ENCODE measurements at regions of chr20 and their contacts with region 1.

Region 1: GRCh38 chr20:2752567-2753460 is 47.6 kb downstream of the CPXM1 start:
- DNase-seq: peak; percentile 63 to 72 (median 66)
- ATAC-seq: peak; percentile 74
- H3K4me3 ChIP-seq: peak overlapping the region; percentile 40
- H3K27ac ChIP-seq: no peak overlapping the region
- H3K4me1 ChIP-seq: peaks cover 2 to 39% of the 10 kb centered on the region in 2 experiments; a peak in 4 of 5 replicates
- H3K27me3 ChIP-seq: peaks cover 0 to 35% of the 10 kb centered on the region in 2 experiments; a peak in 2 of 5 replicates
- CTCF ChIP-seq: peak; percentile 64 to 79 (median 75)
- EP300 ChIP-seq: no peak
- POLR2A ChIP-seq: no peak
- RAD21 ChIP-seq: peak in 1 of 2 experiments; percentile 45; a peak in 2 of 4 replicates

Region 2: DNA sequence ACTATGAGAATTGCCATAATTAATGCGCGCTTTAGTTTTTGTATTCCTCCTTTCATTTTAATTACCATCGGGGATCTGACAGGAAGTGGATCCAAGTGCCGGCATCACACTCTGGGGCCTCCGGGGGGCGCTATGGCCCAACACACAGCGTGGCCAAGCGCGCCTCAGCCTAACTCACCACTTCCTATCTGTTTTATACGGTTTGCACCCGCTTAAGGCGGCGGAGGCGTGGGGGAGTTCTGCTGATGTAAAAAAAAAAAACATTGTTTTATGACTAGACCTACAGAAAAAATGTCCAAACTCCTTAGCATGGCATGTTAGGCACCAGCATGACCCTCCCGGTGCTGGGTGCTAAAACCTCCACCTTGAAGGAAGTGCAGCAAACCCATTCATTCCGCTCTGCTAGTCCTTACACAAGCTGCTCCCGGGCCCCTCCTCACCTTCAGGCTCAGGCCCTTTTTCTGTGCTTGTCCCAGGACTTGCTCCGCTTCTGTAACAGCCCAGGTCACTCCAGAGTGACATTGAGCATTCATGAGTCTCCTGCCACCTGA is 64.7 kb before region 1 on chr20:
- CTCF ChIA-PET with region 1: no interaction called
- POLR2A ChIA-PET with region 1: no interaction called
- in situ Hi-C with region 1: no loop called
- intact Hi-C with region 1: loop called (anchors 1 kb)
- DNase-seq: peak; percentile 60 to 77 (median 64)
- ATAC-seq: peak; percentile 95
- H3K4me3 ChIP-seq: no peak overlapping the region; the same call in 1 of the 2 replicates
- H3K27ac ChIP-seq: no peak overlapping the region
- H3K4me1 ChIP-seq: peaks cover 0 to 9% of the 10 kb centered on the region in 2 experiments; a peak in 3 of 5 replicates
- H3K27me3 ChIP-seq: peaks cover 6 to 28% of the 10 kb centered on the region in 2 experiments; a peak in 4 of 5 replicates
- CTCF ChIP-seq: peak; percentile 83 to 89 (median 84)
- EP300 ChIP-seq: no peak
- POLR2A ChIP-seq: no peak
- RAD21 ChIP-seq: peak; percentile 65 to 80

Region 3: DNA sequence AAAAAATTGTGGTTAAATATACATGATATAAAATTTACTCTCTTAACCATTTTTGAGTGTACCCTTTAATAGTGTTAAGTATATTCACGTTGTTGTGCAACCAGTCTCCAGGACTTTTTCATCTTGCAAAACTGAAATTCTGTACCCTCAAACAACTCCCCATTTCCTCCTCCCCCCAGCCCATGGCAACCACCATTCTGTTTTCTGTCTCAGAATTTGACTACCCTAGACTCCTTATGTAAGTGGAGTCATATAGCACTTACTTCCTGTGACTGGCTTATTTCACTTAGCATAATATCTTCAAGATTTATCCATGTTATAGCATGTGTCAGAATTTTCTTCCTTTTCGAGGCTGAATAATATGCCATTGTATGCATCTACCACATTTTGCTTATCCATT is 92.8 kb after region 1 on chr20:
- CTCF ChIA-PET with region 1: interaction called, 24 read pairs
- POLR2A ChIA-PET with region 1: no interaction called
- in situ Hi-C with region 1: loop called (anchors 5 kb)
- intact Hi-C with region 1: no loop called
- DNase-seq: no peak
- ATAC-seq: no peak
- H3K4me3 ChIP-seq: no peak overlapping the region
- H3K27ac ChIP-seq: no peak overlapping the region
- H3K4me1 ChIP-seq: peaks cover 5 to 8% of the 10 kb centered on the region in 2 experiments; a peak in 3 of 5 replicates
- H3K27me3 ChIP-seq: no peaks in the 10 kb centered on the region
- CTCF ChIP-seq: no peak
- EP300 ChIP-seq: no peak
- POLR2A ChIP-seq: no peak
- RAD21 ChIP-seq: no peak

Region 4: GRCh38 chr20:2851086-2851485 is 98.3 kb after region 1 on chr20:
- CTCF ChIA-PET with region 1: interaction called, 24 read pairs
- POLR2A ChIA-PET with region 1: no interaction called
- in situ Hi-C with region 1: loop called (anchors 5 kb)
- intact Hi-C with region 1: loop called (anchors 1 kb)
- DNase-seq: no peak
- ATAC-seq: no peak
- H3K4me3 ChIP-seq: no peak overlapping the region
- H3K27ac ChIP-seq: no peak overlapping the region
- H3K4me1 ChIP-seq: peaks cover 2 to 3% of the 10 kb centered on the region in 2 experiments; a peak in 2 of 5 replicates
- H3K27me3 ChIP-seq: no peaks in the 10 kb centered on the region
- CTCF ChIP-seq: no peak
- EP300 ChIP-seq: no peak
- POLR2A ChIP-seq: no peak
- RAD21 ChIP-seq: no peak

Region 5: DNA sequence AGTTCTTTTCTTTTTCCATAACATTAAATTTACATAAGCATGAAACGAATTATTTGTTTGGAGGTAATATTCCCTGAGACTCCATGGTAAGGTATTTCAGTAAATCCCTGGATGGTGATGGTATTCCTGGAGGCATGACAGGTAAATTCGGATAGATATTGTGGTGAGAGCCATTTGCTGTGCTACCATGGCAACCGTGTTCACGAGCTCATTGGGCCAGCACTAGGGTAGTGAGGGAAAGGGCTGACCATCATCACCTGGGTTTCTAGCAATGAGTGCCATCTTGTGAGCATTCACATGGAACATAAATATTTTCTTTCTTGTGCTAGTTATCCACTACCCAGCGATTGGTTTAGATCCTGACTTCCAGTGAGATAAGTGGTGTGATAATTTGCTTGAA is 238.7 kb after region 1 on chr20:
- CTCF ChIA-PET with region 1: no interaction called
- POLR2A ChIA-PET with region 1: no interaction called
- in situ Hi-C with region 1: loop called (anchors 10 kb)
- intact Hi-C with region 1: no loop called
- DNase-seq: peak in 1 of 4 experiments; percentile 11
- ATAC-seq: no peak
- H3K4me3 ChIP-seq: no peak overlapping the region
- H3K27ac ChIP-seq: no peak overlapping the region
- H3K4me1 ChIP-seq: no peaks in the 10 kb centered on the region
- H3K27me3 ChIP-seq: no peaks in the 10 kb centered on the region
- CTCF ChIP-seq: no peak
- EP300 ChIP-seq: no peak
- POLR2A ChIP-seq: no peak
- RAD21 ChIP-seq: no peak

Region 6: GRCh38 chr20:3000852-3001523 is 248.2 kb after region 1 on chr20:
- CTCF ChIA-PET with region 1: interaction called, 9 read pairs
- POLR2A ChIA-PET with region 1: no interaction called
- in situ Hi-C with region 1: loop called (anchors 10 kb)
- intact Hi-C with region 1: loop called (anchors 2 kb)
- DNase-seq: peak; percentile 16 to 59 (median 20)
- ATAC-seq: peak; percentile 88
- H3K4me3 ChIP-seq: no peak overlapping the region
- H3K27ac ChIP-seq: no peak overlapping the region
- H3K4me1 ChIP-seq: no peaks in the 10 kb centered on the region
- H3K27me3 ChIP-seq: no peaks in the 10 kb centered on the region
- CTCF ChIP-seq: peak in 2 of 3 experiments; percentile 49 to 60; a peak in 4 of 6 replicates
- EP300 ChIP-seq: no peak
- POLR2A ChIP-seq: no peak
- RAD21 ChIP-seq: peak; percentile 42 to 68

Measured in K562 (cell line).